MCF 10A (cell line): ENCODE measurements at regions of chr11 and their contacts with region 1.

Region 1: GRCh38 chr11:19437760-19438159 is 197.0 kb upstream of the E2F8 start:
- DNase-seq: peak; percentile 85
- H3K4me3 Mint-ChIP-seq: no peak overlapping the region
- H3K27ac Mint-ChIP-seq: no peak overlapping the region
- H3K4me1 Mint-ChIP-seq: peaks cover 36% of the 10 kb centered on the region
- H3K27me3 Mint-ChIP-seq: peaks cover 11% of the 10 kb centered on the region
- CTCF ChIP-seq: no peak

Region 2: GRCh38 chr11:19370100-19370861 is 67.5 kb before region 1 on chr11:
- CTCF ChIA-PET with region 1: no interaction called
- POLR2A ChIA-PET with region 1: interaction called, 3 read pairs
- intact Hi-C with region 1: loop called (anchors 5 kb)
- DNase-seq: peak; percentile 62
- H3K4me3 Mint-ChIP-seq: no peak overlapping the region
- H3K27ac Mint-ChIP-seq: no peak overlapping the region
- H3K4me1 Mint-ChIP-seq: peaks cover 49% of the 10 kb centered on the region
- H3K27me3 Mint-ChIP-seq: no peaks in the 10 kb centered on the region
- CTCF ChIP-seq: no peak

Region 3: GRCh38 chr11:19474954-19475715 is 37.4 kb after region 1 on chr11:
- CTCF ChIA-PET with region 1: no interaction called
- POLR2A ChIA-PET with region 1: no interaction called
- intact Hi-C with region 1: no loop called
- DNase-seq: no peak
- H3K4me3 Mint-ChIP-seq: no peak overlapping the region
- H3K27ac Mint-ChIP-seq: no peak overlapping the region
- H3K4me1 Mint-ChIP-seq: no peaks in the 10 kb centered on the region
- H3K27me3 Mint-ChIP-seq: peaks cover 88% of the 10 kb centered on the region
- CTCF ChIP-seq: no peak